Heart left ventricle (tissue), 16 donors: ENCODE measurements at regions of chr1 and their contacts with region 1.

Region 1: GRCh38 chr1:21280011-21280471 is 10.2 kb downstream of the ECE1 start:
- DNase-seq: peak in 4 of 5 donors; percentile 66 to 85 (median 75)
- ATAC-seq: peak; percentile 77 to 91 (median 84)
- H3K4me3 ChIP-seq: peak overlapping the region in 4 of 12 donors; percentile 36 to 48 (median 38)
- H3K27ac ChIP-seq: peak overlapping the region; percentile 68 to 98 (median 92)
- H3K4me1 ChIP-seq: peaks cover 8 to 82% (median 63%) of the 10 kb centered on the region in 12 donors
- H3K27me3 ChIP-seq: no peaks in the 10 kb centered on the region
- CTCF ChIP-seq: no peak
- POLR2A ChIP-seq: no peak

Region 2: GRCh38 chr1:21324368-21325141 is 44.5 kb after region 1 on chr1:
- intact Hi-C with region 1: loop called in 2 of 10 experiments (anchors 5 kb)
- DNase-seq: peak; percentile 79 to 92 (median 85)
- ATAC-seq: peak; percentile 65 to 88 (median 78)
- H3K4me3 ChIP-seq: peak overlapping the region in 2 of 12 donors; percentile 0 to 2
- H3K27ac ChIP-seq: peak overlapping the region; percentile 5 to 91 (median 83)
- H3K4me1 ChIP-seq: peaks cover 12 to 90% (median 73%) of the 10 kb centered on the region in 12 donors
- H3K27me3 ChIP-seq: no peaks in the 10 kb centered on the region
- CTCF ChIP-seq: no peak
- POLR2A ChIP-seq: no peak